Breast epithelium (tissue), 4 donors: ENCODE measurements at regions of chr11 and their contacts with region 1.

Region 1: DNA sequence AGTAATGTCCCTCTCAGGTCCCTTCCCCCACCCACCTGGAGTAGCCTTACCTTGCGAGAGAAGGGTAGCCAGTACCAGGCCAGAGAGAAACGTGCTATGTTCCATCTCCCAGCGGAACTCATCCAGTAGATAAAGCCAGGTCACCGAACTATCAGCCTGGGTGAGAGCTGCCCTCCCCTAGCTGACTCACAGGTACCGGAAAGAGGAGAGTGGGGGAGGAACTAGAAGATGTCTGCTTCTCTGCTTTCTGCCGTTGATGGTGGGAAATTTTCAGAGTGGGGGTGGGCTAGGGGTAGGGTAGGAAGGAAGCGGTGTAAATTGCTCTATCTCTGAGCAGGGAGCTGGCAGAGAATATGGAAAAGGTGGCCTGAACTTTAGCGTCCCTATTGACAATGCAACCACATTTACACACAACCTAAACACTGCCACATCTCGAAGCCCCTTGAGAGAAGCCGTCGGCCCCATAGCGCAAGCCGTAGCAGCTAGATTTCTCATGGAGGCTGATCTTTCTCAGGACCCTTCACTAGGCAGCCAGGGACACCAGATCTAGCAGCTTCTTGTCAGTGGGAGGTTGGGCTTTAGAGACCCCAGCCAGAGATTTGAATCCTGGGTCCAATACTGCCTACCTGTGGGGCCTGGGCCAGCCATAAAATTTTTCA is at the start of gene CD3D:
- DNase-seq: no peak
- H3K4me3 ChIP-seq: peak within 1 kb of the TSS in 1 of 3 donors; percentile 20
- H3K27ac ChIP-seq: no peak within 1 kb of the TSS
- H3K4me1 ChIP-seq: no peaks in the 10 kb centered on the region
- H3K27me3 ChIP-seq: peaks cover 0 to 5% of the 10 kb centered on the region in 2 donors
- CTCF ChIP-seq: no peak
- POLR2A ChIP-seq: no peak
- total RNA-seq, gene CD3D: 2.6 to 4.8 (median 3.5) TPM

Region 2: DNA sequence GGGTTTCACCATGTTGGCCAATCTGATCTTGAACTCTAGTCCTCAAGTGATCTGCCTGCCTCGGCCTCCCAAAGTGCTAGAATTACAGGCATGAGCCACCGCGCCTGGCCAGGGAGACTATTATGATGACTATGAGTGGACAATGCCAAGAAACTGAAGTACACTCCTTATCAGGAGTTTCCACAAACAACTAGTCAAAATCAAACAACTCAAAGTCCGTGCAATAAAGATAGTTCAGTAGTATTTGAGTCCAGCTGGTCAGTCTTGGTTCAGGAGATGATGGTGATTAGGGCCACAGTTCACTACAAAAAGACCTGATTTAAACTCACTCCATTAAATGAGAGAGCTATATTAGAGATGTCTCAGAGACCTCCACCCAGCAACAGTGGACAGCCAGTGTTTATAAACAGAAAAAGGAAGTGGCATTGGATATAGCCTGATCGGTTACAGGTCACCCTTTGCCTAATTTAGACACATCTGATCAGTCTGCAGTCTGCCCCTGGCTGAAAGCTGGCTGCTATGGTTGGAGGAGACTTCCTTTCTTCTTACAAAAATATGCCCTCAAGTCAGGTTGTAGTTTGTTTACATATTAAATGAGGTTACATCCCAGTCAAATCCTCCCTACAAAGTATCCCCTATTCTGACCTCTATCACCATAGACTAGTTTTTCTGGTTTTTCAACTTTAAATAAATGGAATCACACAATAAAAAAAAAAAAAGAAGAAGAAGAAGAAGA is 21.1 kb before region 1 on chr11:
- intact Hi-C with region 1: loop called (anchors 1 kb)
- DNase-seq: no peak
- H3K4me3 ChIP-seq: no peak overlapping the region
- H3K27ac ChIP-seq: no peak overlapping the region
- H3K4me1 ChIP-seq: no peaks in the 10 kb centered on the region
- H3K27me3 ChIP-seq: no peaks in the 10 kb centered on the region
- CTCF ChIP-seq: no peak
- POLR2A ChIP-seq: no peak